Right ventricle myocardium superior (tissue), 1 donor: ENCODE measurements at regions of chr7 and their contacts with region 1.

Region 1: DNA sequence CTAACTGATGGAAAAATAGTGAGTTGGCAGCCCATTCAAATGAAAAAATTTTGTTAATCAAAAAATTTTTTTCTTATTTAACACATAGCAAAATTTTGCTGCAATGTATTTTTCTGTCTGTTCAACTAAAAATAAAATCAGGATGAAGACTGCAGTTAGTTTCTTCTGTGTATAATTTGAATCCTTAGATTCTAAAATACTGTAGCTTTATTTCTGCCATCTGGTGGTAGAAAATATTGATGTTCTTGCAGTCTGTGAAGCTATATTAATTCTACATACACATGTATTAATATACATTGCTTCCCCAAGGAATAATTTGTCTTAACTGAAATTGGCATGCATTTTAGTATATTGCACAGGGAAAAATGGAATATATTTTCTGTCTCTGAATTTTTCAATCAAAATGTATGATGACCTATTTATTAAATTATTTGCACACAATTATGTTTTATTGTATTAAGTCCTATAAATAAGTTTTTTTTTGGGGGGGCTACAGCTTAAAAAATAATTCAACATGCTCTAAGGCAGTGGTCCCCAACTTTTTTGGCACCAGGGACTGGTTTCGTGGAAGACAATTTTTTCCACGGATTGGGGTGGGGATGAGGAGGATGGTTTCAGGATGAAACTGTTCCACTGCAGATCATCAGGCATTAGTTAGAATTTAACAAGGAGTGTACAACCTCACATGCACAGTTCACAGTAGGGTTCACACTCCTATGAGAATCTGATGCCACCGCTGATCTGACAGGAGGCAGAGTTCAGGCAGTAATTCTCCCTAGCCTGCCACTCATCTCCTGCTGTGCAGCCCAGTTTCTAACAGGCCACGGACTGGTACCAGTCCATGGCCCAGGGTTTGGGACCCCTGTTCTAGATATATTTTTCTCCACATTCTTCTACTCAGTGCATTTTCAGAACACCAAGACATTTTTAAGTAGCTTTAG is 119.4 kb downstream of the GNAT3 start:
- DNase-seq: no peak
- ATAC-seq: no peak

Region 2: DNA sequence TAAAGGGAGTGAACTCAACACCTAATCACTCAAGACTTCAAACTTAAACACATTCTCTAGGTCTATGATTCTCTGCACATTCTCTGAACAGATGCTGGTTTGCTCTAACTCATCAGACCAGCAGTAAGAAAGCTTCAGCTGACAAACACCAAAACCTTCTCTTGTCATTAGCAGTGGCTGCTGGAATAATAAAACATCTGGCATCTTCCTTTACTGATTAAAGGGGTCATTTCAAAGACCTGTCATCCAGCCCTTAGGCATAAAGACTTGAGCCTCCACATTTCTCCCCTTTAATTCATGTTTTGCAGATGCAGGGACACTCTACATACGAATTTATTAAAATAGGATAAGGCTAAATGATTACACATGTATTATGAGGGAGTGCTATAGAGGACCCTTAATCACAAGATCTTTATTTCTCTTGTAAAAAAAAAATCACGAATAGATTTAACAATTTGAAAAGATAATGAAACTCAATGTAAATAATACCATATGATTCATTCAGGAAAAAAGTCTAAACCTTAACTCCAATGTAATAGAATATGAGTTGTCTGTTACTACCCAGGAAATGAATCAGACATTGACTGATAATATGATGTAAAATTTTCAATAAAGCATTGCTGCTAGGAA is 410.2 kb before region 1 on chr7:
- intact Hi-C with region 1: no loop called
- DNase-seq: no peak
- ATAC-seq: no peak

Region 3: DNA sequence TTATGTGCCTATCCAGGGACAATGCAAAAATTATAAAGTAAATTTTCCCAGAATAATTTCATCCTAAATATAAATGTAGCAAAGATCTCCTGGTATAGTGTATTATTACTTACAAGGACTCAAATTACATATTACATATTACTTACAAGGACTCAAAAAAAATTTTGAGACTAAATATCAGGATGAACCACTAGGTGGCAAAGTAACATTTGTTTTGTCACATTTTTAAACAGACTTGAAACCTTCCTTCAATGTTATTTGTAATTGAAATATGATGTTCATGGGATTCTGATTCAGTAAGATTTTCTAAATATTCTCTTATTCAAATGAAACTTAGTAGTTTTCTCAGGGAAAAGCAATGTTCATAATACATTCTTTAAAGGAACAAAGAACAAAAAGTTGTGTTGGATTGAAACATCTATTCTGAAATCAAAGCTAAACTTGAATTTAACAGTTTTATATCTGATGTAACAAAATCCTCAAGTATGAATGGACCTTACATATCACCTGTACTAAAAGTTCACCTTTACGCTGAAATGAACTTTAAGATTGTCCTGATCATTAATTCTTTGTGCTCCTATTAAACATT is 332.2 kb before region 1 on chr7:
- intact Hi-C with region 1: loop called (anchors 10 kb)
- DNase-seq: no peak
- ATAC-seq: no peak

Region 4: GRCh38 chr7:80095545-80095944 is 297.0 kb before region 1 on chr7:
- intact Hi-C with region 1: loop called (anchors 5 kb)
- DNase-seq: no peak
- ATAC-seq: no peak

Region 5: GRCh38 chr7:80186721-80187120 is 205.8 kb before region 1 on chr7:
- intact Hi-C with region 1: no loop called
- DNase-seq: no peak
- ATAC-seq: no peak

Region 6: GRCh38 chr7:80335511-80336231 is 56.8 kb before region 1 on chr7:
- intact Hi-C with region 1: no loop called
- DNase-seq: no peak
- ATAC-seq: peak; percentile 53